CD14-positive monocyte (primary cell): ENCODE measurements at regions of chr11 and their contacts with region 1.

Region 1: DNA sequence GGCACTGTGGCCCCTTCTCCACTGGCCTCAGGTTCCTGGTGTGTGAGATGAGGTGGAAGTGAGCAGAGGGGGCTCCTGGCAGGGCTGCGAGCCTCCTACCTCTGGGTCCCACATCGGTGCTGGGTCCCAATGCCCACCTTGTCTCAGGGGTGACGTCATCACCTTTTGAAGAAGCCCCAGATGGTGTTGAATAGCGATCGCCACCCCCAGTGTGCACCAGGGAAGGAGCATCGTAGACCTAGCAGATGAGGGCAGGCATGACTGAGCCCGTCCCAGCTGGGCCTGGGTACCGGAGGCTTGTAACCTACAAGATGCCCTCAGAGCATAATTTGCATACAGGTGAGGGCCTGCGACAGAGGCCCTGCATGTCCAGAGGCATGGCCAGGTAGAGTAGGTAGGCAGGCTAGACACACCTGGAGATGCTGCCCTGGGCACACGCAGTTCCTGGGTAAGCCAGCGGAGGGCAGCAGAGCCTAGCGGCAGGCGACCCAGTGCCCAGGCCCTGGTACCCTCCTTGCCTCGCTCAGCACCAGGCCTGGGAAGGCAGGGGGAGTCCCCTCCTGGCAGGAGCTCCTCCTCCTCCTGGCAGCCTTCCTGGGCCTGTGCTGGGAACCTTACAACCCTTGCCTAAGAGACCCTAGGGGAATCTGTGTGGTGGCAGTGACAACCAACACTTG is 52.5 kb downstream of the TPCN2 start:
- DNase-seq: peak; percentile 38 to 65 (median 55)
- H3K4me3 ChIP-seq: no peak overlapping the region
- H3K4me3 Mint-ChIP-seq: no peak overlapping the region
- H3K27ac ChIP-seq: no peak overlapping the region
- H3K27ac Mint-ChIP-seq: no peak overlapping the region
- H3K4me1 ChIP-seq: no peaks in the 10 kb centered on the region
- H3K4me1 Mint-ChIP-seq: peaks cover 4% of the 10 kb centered on the region
- H3K27me3 ChIP-seq: peaks cover 0 to 3% of the 10 kb centered on the region in 2 donors
- H3K27me3 Mint-ChIP-seq: peaks cover 12 to 35% (median 19%) of the 10 kb centered on the region in 3 donors
- CTCF ChIP-seq: peak; percentile 99

Region 2: GRCh38 chr11:69231466-69232018 is 130.3 kb after region 1 on chr11:
- intact Hi-C with region 1: no loop called
- DNase-seq: no peak
- H3K4me3 ChIP-seq: no peak overlapping the region
- H3K4me3 Mint-ChIP-seq: no peak overlapping the region
- H3K27ac ChIP-seq: no peak overlapping the region
- H3K27ac Mint-ChIP-seq: no peak overlapping the region
- H3K4me1 ChIP-seq: no peaks in the 10 kb centered on the region
- H3K4me1 Mint-ChIP-seq: no peaks in the 10 kb centered on the region
- H3K27me3 ChIP-seq: peaks cover 0 to under 1% of the 10 kb centered on the region in 2 donors
- H3K27me3 Mint-ChIP-seq: peaks cover 3 to 11% (median 5%) of the 10 kb centered on the region in 3 donors
- CTCF ChIP-seq: no peak

Region 3: DNA sequence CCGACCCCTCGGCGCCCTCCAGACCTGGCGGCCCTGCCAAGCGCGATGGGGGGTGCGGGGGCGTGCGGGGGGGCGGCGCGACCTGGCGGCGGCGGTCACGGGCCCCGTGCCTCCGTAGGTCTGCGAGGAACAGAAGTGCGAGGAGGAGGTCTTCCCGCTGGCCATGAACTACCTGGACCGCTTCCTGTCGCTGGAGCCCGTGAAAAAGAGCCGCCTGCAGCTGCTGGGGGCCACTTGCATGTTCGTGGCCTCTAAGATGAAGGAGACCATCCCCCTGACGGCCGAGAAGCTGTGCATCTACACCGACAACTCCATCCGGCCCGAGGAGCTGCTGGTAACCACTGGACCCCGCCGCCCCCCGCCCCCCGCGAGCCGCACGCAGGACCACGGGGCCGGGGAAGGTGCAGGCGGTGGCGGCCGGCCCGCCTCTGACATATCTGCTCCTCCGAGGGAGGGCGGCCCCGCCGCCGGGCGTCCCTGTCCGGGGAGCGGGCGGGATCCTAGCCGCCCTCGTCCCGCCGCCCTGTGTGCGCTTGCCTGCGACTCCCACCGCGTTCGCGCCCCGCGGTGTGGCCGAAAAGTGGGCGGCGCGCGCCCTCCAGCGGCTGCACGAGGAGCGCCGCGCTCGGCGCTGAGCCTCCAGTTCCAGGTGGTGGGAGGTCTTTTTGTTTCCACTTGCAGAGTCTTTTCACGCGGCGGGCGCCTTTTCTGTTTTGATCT is 541.8 kb after region 1 on chr11:
- intact Hi-C with region 1: loop called (anchors 1 to 2 kb)
- DNase-seq: peak; percentile 51 to 63 (median 57)
- H3K4me3 ChIP-seq: peak overlapping the region; percentile 51 to 87 (median 53)
- H3K4me3 Mint-ChIP-seq: peak overlapping the region; percentile 77 to 84
- H3K27ac ChIP-seq: no peak overlapping the region
- H3K27ac Mint-ChIP-seq: no peak overlapping the region
- H3K4me1 ChIP-seq: peaks cover 31 to 41% of the 10 kb centered on the region in 2 donors
- H3K4me1 Mint-ChIP-seq: peaks cover 23% of the 10 kb centered on the region
- H3K27me3 ChIP-seq: peaks cover 25 to 55% of the 10 kb centered on the region in 2 donors
- H3K27me3 Mint-ChIP-seq: peaks cover 45 to 69% (median 45%) of the 10 kb centered on the region in 3 donors
- CTCF ChIP-seq: peak; percentile 97

Region 4: GRCh38 chr11:69670158-69670845 is 569.0 kb after region 1 on chr11:
- intact Hi-C with region 1: loop called in 1 of 2 experiments (anchors 2 kb)
- DNase-seq: peak; percentile 42 to 63 (median 56)
- H3K4me3 ChIP-seq: no peak overlapping the region
- H3K4me3 Mint-ChIP-seq: no peak overlapping the region
- H3K27ac ChIP-seq: no peak overlapping the region
- H3K27ac Mint-ChIP-seq: peak overlapping the region in 1 of 7 donors; percentile 55
- H3K4me1 ChIP-seq: peaks cover 9 to 19% of the 10 kb centered on the region in 2 donors
- H3K4me1 Mint-ChIP-seq: peaks cover 21% of the 10 kb centered on the region
- H3K27me3 ChIP-seq: no peaks in the 10 kb centered on the region
- H3K27me3 Mint-ChIP-seq: no peaks in the 10 kb centered on the region
- CTCF ChIP-seq: peak; percentile 94